CD8-positive, alpha-beta T cell (primary cell): ENCODE measurements at regions of chr2 and their contacts with region 1.

Region 1: GRCh38 chr2:212364112-212364985 is 174.3 kb downstream of the ERBB4 start:
- DNase-seq: no peak
- ATAC-seq: no peak
- H3K4me3 ChIP-seq: no peak overlapping the region
- H3K4me3 Mint-ChIP-seq: no peak overlapping the region
- H3K27ac ChIP-seq: no peak overlapping the region
- H3K27ac Mint-ChIP-seq: no peak overlapping the region
- H3K4me1 ChIP-seq: no peaks in the 10 kb centered on the region
- H3K4me1 Mint-ChIP-seq: no peaks in the 10 kb centered on the region
- H3K27me3 ChIP-seq: no peaks in the 10 kb centered on the region
- H3K27me3 Mint-ChIP-seq: no peaks in the 10 kb centered on the region
- CTCF ChIP-seq: no peak

Region 2: DNA sequence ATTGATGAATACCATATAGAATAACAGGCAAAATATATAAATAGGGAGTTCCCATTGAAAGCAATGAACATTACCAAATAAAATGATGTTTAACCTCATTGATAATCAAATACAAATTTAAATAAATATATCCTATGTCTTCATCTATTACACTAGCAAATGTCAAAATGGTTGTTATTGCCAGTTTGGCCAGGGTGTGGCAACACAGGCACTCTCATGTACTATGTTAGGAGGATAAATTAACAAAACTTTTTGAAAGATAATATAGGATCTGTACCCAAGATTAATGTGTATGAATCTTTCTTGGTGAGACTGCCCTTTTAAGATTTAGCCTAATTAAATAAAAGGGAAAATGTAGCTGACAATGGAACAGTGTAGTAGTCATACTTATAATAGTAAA is 485.0 kb before region 1 on chr2:
- CTCF ChIA-PET with region 1: no interaction called
- POLR2A ChIA-PET with region 1: no interaction called
- intact Hi-C with region 1: no loop called
- DNase-seq: no peak
- ATAC-seq: no peak
- H3K4me3 ChIP-seq: no peak overlapping the region
- H3K4me3 Mint-ChIP-seq: no peak overlapping the region
- H3K27ac ChIP-seq: no peak overlapping the region
- H3K27ac Mint-ChIP-seq: no peak overlapping the region
- H3K4me1 ChIP-seq: no peaks in the 10 kb centered on the region
- H3K4me1 Mint-ChIP-seq: no peaks in the 10 kb centered on the region
- H3K27me3 ChIP-seq: no peaks in the 10 kb centered on the region
- H3K27me3 Mint-ChIP-seq: no peaks in the 10 kb centered on the region
- CTCF ChIP-seq: no peak

Region 3: GRCh38 chr2:212181646-212182045 is 182.7 kb before region 1 on chr2:
- CTCF ChIA-PET with region 1: no interaction called
- POLR2A ChIA-PET with region 1: no interaction called
- intact Hi-C with region 1: no loop called
- DNase-seq: no peak
- ATAC-seq: no peak
- H3K4me3 ChIP-seq: no peak overlapping the region
- H3K4me3 Mint-ChIP-seq: no peak overlapping the region
- H3K27ac ChIP-seq: no peak overlapping the region
- H3K27ac Mint-ChIP-seq: no peak overlapping the region
- H3K4me1 ChIP-seq: no peaks in the 10 kb centered on the region
- H3K4me1 Mint-ChIP-seq: no peaks in the 10 kb centered on the region
- H3K27me3 ChIP-seq: no peaks in the 10 kb centered on the region
- H3K27me3 Mint-ChIP-seq: no peaks in the 10 kb centered on the region
- CTCF ChIP-seq: no peak

Region 4: DNA sequence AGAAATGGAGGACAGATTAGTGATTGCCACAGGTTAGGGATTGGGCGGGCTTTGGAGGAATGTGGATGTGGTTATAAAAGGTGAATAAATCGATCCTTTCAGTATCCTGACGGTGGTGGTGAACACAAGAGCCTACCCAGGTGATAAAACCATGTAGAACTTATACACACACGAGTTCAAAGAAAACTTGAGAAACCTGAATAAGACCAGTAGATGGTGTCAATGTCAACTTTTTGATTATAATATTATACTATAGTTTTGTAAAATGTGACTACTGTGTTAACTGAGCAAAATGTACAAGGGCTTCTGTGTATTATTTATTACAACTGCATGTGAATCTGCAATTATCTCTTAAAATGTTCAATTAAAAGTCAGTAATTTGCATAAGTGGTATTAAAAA is 38.0 kb after region 1 on chr2:
- CTCF ChIA-PET with region 1: no interaction called
- POLR2A ChIA-PET with region 1: no interaction called
- intact Hi-C with region 1: loop called in 1 of 2 experiments (anchors 1 kb)
- DNase-seq: no peak
- ATAC-seq: no peak
- H3K4me3 ChIP-seq: no peak overlapping the region
- H3K4me3 Mint-ChIP-seq: no peak overlapping the region
- H3K27ac ChIP-seq: no peak overlapping the region
- H3K27ac Mint-ChIP-seq: no peak overlapping the region
- H3K4me1 ChIP-seq: no peaks in the 10 kb centered on the region
- H3K4me1 Mint-ChIP-seq: no peaks in the 10 kb centered on the region
- H3K27me3 ChIP-seq: no peaks in the 10 kb centered on the region
- H3K27me3 Mint-ChIP-seq: no peaks in the 10 kb centered on the region
- CTCF ChIP-seq: no peak